AG04449 (cell line): ENCODE measurements at regions of chr14 and their contacts with region 1.

Region 1: DNA sequence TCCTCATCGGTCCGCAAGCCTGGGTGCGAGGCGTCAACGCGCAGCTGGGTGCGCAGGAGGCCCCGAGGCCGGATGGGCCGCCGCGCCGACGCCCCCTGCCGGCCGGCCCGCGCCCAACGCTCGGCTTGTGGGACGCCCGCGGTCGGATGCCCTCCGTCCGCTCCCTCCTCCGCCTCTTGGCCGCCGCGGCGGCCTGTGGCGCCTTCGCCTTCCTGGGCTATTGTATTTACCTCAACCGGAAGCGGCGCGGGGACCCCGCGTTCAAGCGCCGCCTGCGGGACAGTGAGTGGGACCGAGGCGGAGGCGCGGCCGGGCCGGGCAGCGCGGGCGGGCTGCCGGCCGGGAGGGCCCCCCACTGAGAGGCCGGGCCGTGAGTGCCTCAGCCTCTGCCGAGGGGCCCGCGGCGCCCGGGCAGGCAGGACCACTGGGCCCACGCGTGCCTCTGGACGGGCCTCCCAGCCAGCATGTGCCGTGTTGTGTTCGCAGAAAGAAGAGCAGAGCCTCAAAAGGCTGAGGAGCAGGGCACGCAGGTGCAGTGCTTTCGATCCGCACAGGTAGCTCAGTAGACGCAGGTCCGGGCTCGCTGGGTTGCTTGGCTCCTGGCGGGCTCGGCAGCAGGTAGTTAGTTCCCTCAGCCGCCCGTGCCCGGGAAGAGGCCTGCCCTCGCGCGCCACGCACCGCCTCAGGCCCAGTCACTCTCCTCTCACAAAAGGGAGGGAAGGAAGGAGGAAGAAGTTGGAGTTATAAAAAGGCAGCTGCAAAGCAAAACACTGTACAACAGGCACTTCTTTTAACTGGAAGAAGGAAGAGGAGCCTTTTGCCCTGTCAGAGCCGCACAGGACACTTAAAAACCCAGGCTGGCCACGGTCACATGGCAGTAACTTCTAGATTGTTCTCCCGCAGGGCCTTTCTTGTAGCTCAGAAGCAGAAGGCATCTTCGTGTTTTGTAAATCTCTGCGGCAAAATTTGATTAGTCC is at the start of gene TOMM20L:
- DNase-seq: no peak
- H3K4me3 ChIP-seq: peak within 1 kb of the TSS; percentile 56
- CTCF ChIP-seq: peak; percentile 45

Region 2: GRCh38 chr14:58107947-58108552 is 288.1 kb before region 1 on chr14:
- CTCF ChIA-PET with region 1: interaction called, 37 read pairs
- POLR2A ChIA-PET with region 1: no interaction called
- DNase-seq: no peak
- H3K4me3 ChIP-seq: no peak overlapping the region
- CTCF ChIP-seq: peak; percentile 52

Region 3: GRCh38 chr14:58362798-58363412 is 33.2 kb before region 1 on chr14:
- CTCF ChIA-PET with region 1: interaction called, 11 read pairs
- POLR2A ChIA-PET with region 1: no interaction called
- DNase-seq: no peak
- H3K4me3 ChIP-seq: no peak overlapping the region
- CTCF ChIP-seq: peak; percentile 25

Region 4: GRCh38 chr14:58376791-58377190 is 19.3 kb before region 1 on chr14:
- CTCF ChIA-PET with region 1: interaction called, 48 read pairs
- POLR2A ChIA-PET with region 1: no interaction called
- DNase-seq: no peak
- H3K4me3 ChIP-seq: no peak overlapping the region
- CTCF ChIP-seq: no peak

Region 5: DNA sequence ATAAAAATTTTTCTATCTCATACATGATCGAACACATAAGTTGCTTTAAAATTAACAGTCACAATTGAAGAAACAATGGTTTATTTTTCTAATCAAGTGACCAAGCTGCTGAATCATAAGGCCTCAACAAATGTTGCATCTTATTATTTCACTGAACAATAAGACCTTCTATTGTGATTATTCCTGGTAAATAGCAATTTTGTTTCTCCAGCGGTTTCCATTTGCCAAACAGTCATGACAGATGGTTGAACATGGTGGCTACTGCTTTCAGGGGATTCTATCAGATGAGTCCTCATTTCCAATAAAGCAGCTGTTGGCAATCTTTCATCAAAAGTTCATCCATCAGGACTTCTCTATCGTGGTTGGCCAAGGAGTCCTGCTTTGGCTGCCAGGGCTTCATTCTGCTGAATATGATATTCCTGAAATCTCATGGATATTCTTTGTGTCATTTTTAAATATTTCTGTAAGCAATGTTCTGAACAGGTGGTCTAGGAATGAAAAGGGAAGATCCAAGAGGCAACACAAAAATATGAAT is 12.6 kb after region 1 on chr14:
- CTCF ChIA-PET with region 1: interaction called, 38 read pairs
- POLR2A ChIA-PET with region 1: no interaction called
- DNase-seq: no peak
- H3K4me3 ChIP-seq: no peak overlapping the region
- CTCF ChIP-seq: no peak

Region 6: GRCh38 chr14:58427281-58428117 is 31.4 kb after region 1 on chr14 and contains the starts of genes KIAA0586 and TIMM9:
- CTCF ChIA-PET with region 1: interaction called, 32 read pairs
- POLR2A ChIA-PET with region 1: no interaction called
- DNase-seq: peak; percentile 91
- H3K4me3 ChIP-seq: peak within 1 kb of the TSS; percentile 89
- CTCF ChIP-seq: no peak

Region 7: GRCh38 chr14:58439476-58439875 is 43.4 kb after region 1 on chr14:
- CTCF ChIA-PET with region 1: no interaction called
- POLR2A ChIA-PET with region 1: no interaction called
- DNase-seq: no peak
- H3K4me3 ChIP-seq: no peak overlapping the region
- CTCF ChIP-seq: no peak